H1 (cell line): ENCODE measurements at regions of chr6 and their contacts with region 1.

Region 1: GRCh38 chr6:110815217-110816109 is at the start of gene CDK19:
- DNase-seq: peak; percentile 96 to 97
- H3K4me3 ChIP-seq: peak within 1 kb of the TSS; percentile 84 to 95 (median 92)
- H3K27ac ChIP-seq: peak within 1 kb of the TSS; percentile 99
- H3K4me1 ChIP-seq: peaks cover 0 to 3% (median 1%) of the 10 kb centered on the region in 4 experiments; a peak in 4 of 7 replicates
- H3K27me3 ChIP-seq: no peaks in the 10 kb centered on the region
- CTCF ChIP-seq: no peak
- EP300 ChIP-seq: no peak; a peak in 1 of 3 replicates
- POLR2A ChIP-seq: peak; percentile 90 to 99
- RAD21 ChIP-seq: no peak
- total RNA-seq, gene CDK19: 9.7 and 12.6 TPM in 2 replicates

Region 2: GRCh38 chr6:110712238-110712637 is 103.2 kb before region 1 on chr6:
- CTCF ChIA-PET with region 1: no interaction called
- POLR2A ChIA-PET with region 1: no interaction called
- DNase-seq: no peak
- H3K4me3 ChIP-seq: no peak overlapping the region
- H3K27ac ChIP-seq: no peak overlapping the region
- H3K4me1 ChIP-seq: peaks cover 0 to 6% (median 0%) of the 10 kb centered on the region in 4 experiments; a peak in 3 of 7 replicates
- H3K27me3 ChIP-seq: no peaks in the 10 kb centered on the region
- CTCF ChIP-seq: no peak
- EP300 ChIP-seq: no peak
- POLR2A ChIP-seq: no peak
- RAD21 ChIP-seq: no peak

Region 3: GRCh38 chr6:110826236-110827129 is 11.0 kb after region 1 on chr6:
- CTCF ChIA-PET with region 1: no interaction called
- POLR2A ChIA-PET with region 1: interaction called, 11 read pairs
- DNase-seq: no peak
- H3K4me3 ChIP-seq: no peak overlapping the region
- H3K27ac ChIP-seq: no peak overlapping the region
- H3K4me1 ChIP-seq: no peaks in the 10 kb centered on the region
- H3K27me3 ChIP-seq: no peaks in the 10 kb centered on the region
- CTCF ChIP-seq: no peak
- EP300 ChIP-seq: no peak
- POLR2A ChIP-seq: no peak
- RAD21 ChIP-seq: no peak

Region 4: DNA sequence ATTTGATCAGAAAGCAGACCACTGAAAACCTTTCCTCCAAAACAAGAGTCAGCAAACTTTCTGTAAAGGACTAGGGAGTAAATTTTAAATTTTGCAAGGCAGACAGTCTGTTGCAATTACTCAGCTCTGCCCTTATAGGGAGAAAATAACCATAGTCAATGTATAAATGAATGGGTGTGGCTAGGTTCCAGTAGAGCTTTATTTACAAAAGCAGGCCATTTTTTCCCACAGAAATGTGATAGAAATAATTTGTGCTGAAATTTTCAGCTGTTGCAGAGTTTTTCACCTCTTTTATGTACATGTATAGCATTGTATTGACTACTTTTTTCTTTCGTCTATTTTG is 66.8 kb after region 1 on chr6:
- CTCF ChIA-PET with region 1: interaction called, 6 read pairs
- POLR2A ChIA-PET with region 1: interaction called, 344 read pairs
- DNase-seq: no peak
- H3K4me3 ChIP-seq: no peak overlapping the region
- H3K27ac ChIP-seq: no peak overlapping the region
- H3K4me1 ChIP-seq: peaks cover 1 to 9% (median 5%) of the 10 kb centered on the region in 4 experiments; a peak in 6 of 7 replicates
- H3K27me3 ChIP-seq: no peaks in the 10 kb centered on the region
- CTCF ChIP-seq: no peak
- EP300 ChIP-seq: no peak
- POLR2A ChIP-seq: no peak
- RAD21 ChIP-seq: no peak